GM12878 (cell line): ENCODE measurements at regions of chr2 and their contacts with region 1.

Region 1: DNA sequence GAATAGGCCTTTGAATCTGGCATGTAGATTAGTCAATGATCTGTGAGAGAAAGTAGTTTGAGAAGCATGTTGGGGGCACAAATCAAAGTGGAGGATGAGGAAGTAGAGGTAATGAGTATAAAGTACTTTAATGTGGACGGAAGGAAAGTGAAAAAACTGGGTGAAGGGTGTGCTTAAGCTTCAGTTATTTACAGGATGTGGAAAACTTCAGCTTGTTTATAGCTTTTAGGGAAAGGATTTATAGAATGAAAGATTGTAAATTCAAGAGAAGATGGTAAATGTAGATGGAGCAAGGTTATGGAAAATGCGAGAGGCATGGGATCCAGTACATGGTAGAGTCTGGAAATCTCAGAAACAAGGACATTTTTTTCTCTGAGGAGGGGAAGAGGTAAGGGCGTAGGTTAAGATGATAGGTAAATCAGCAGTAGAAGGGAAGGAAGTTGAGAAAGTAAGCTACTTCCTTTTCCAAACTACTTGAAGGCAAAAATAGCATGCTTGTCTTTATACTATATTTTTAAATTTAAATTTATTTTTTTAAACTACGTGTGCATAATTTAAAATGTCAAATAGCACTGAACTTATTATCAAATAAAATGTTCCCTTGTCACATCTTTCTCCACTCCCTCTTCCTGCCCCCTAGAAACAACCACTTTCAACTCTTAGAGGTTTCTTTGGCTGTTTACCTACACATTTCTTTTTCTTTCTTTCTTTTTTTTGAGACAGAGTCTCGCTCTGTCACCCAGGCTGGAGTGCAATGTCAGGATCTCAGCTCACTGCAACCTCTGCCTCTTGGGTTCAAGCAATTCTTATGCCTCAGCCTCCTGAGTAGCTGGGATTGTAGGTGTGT is 8.5 kb downstream of the FAM117B start:
- DNase-seq: no peak
- ATAC-seq: peak; percentile 40
- H3K4me3 ChIP-seq: peak overlapping the region; percentile 40; the same call in 1 of the 2 replicates
- H3K27ac ChIP-seq: peak overlapping the region; percentile 67
- H3K4me1 ChIP-seq: peaks cover 14% of the 10 kb centered on the region
- H3K27me3 ChIP-seq: no peaks in the 10 kb centered on the region
- CTCF ChIP-seq: no peak
- EP300 ChIP-seq: no peak
- POLR2A ChIP-seq: no peak
- RAD21 ChIP-seq: no peak

Region 2: DNA sequence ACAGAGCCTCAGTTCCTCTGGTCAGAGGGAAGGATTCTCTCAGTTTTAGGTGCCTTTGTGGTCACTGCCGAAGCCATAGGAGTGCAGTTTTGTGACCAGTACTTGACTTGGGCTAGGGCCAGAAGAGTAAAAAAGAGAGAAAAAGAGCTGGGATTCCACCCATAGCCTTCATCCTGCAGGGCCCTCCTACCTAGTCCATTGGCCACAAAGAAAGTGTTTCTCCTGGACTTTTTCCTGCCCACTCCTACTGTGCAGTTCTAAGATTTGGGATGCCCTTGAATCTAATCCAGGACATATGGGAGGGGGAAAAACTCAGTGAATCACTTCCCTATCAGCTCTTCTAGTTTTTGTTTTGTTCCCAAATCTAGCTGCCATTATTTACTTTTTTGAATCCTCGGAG is 17.6 kb after region 1 on chr2:
- CTCF ChIA-PET with region 1: interaction called, 11 read pairs
- POLR2A ChIA-PET with region 1: interaction called, 6 read pairs
- RAD21 ChIA-PET with region 1: interaction called, 7 read pairs
- SMC1A ChIA-PET with region 1: interaction called, 26 read pairs
- in situ Hi-C with region 1: no loop called
- intact Hi-C with region 1: no loop called
- DNase-seq: no peak
- ATAC-seq: no peak
- H3K4me3 ChIP-seq: no peak overlapping the region
- H3K27ac ChIP-seq: no peak overlapping the region
- H3K4me1 ChIP-seq: peaks cover 15% of the 10 kb centered on the region
- H3K27me3 ChIP-seq: no peaks in the 10 kb centered on the region
- CTCF ChIP-seq: no peak
- EP300 ChIP-seq: no peak
- POLR2A ChIP-seq: no peak
- RAD21 ChIP-seq: no peak